PC-9 (cell line): ENCODE measurements at regions of chrX and their contacts with region 1.

Region 1: GRCh38 chrX:13734278-13735172 is at the starts of genes OFD1 and TRAPPC2:
- DNase-seq: peak; percentile 88 to 95
- H3K4me3 ChIP-seq: peak within 1 kb of the TSS; percentile 99
- H3K27ac ChIP-seq: peak within 1 kb of the TSS; percentile 96
- H3K4me1 ChIP-seq: peaks cover 15% of the 10 kb centered on the region; the same call in 1 of the 2 replicates
- H3K27me3 ChIP-seq: no peaks in the 10 kb centered on the region
- CTCF ChIP-seq: no peak
- total RNA-seq, gene OFD1: 31.6 and 35.6 TPM in 2 replicates
- total RNA-seq, gene TRAPPC2: 18.5 and 23.6 TPM in 2 replicates

Region 2: DNA sequence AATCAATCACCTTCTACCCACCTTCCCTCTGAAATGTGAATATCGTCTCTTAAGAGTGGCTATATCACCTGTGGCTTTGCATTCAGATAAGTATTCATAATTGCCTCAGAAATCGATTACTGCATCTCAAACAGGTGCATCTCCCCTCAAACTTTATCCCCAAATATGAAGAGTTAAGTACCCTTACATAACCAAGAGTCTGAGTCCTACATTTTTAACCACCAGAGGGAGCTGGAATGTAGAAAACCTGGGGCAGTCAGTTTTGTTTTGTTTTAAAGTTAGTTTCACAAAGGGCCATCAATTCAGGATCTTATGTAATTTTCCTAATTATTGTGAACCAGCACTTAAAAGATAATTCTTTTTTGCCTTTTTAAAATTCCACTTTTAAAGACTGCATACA is 75.9 kb before region 1 on chrX:
- CTCF ChIA-PET with region 1: interaction called, 3 read pairs
- POLR2A ChIA-PET with region 1: interaction called, 5 read pairs
- intact Hi-C with region 1: loop called (anchors 1 kb)
- DNase-seq: peak in 1 of 2 experiments; percentile 52
- H3K4me3 ChIP-seq: peak overlapping the region; percentile 42; the same call in 1 of the 2 replicates
- H3K27ac ChIP-seq: peak overlapping the region; percentile 91
- H3K4me1 ChIP-seq: peaks cover 24% of the 10 kb centered on the region
- H3K27me3 ChIP-seq: no peaks in the 10 kb centered on the region
- CTCF ChIP-seq: peak; percentile 84

Region 3: GRCh38 chrX:13669246-13669737 is 65.2 kb before region 1 on chrX:
- CTCF ChIA-PET with region 1: no interaction called
- POLR2A ChIA-PET with region 1: no interaction called
- intact Hi-C with region 1: loop called (anchors 2 kb)
- DNase-seq: peak; percentile 74 to 95
- H3K4me3 ChIP-seq: peak overlapping the region; percentile 35; the same call in 1 of the 2 replicates
- H3K27ac ChIP-seq: peak overlapping the region; percentile 94
- H3K4me1 ChIP-seq: peaks cover 35% of the 10 kb centered on the region
- H3K27me3 ChIP-seq: no peaks in the 10 kb centered on the region
- CTCF ChIP-seq: no peak

Region 4: DNA sequence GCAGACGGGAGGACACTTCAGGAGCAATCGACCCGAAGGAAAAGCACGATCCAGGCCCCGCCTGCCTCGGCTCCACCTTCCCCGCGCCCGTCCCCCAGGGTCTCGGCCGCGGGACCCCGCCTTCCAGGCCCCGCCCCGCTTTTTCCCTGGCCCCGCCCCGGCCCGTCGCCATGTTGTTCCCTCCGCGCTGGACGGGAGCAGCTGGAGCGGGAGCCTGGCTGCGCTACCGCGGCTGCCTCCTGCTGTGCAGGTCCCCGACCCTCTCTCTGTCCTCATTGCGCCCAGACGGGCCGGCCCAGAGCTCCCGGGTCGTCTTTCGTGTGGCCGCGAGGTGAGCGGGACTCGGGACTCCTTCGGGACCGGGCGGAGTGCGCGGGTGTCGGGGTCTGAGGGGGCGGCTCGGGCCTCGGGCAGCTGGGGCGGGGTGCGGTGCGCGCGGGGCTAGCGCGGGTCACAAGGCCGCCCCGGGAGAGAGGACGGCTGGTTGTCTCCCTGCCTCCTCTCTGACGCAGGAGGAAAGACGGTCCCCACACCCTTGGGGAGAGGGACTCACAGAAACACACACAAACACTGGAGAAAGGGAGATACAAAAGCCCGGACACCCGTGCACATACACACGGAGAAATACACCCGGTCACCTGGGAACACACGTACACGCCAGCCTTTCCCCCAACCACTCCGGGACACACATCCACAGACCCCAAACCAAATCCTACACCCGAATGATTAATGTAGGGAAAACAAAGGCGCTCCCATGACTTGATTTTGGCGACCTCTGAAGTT is 45.4 kb before region 1 on chrX and contains the start of gene RAB9A:
- CTCF ChIA-PET with region 1: interaction called, 3 read pairs
- POLR2A ChIA-PET with region 1: interaction called, 11 read pairs
- intact Hi-C with region 1: loop called (anchors 2 kb)
- DNase-seq: peak; percentile 54 to 88
- H3K4me3 ChIP-seq: peak within 1 kb of the TSS; percentile 63
- H3K27ac ChIP-seq: peak within 1 kb of the TSS; percentile 82
- H3K4me1 ChIP-seq: peaks cover 54% of the 10 kb centered on the region
- H3K27me3 ChIP-seq: no peaks in the 10 kb centered on the region
- CTCF ChIP-seq: no peak
- total RNA-seq, gene RAB9A: 26.7 and 30.7 TPM in 2 replicates

Region 5: DNA sequence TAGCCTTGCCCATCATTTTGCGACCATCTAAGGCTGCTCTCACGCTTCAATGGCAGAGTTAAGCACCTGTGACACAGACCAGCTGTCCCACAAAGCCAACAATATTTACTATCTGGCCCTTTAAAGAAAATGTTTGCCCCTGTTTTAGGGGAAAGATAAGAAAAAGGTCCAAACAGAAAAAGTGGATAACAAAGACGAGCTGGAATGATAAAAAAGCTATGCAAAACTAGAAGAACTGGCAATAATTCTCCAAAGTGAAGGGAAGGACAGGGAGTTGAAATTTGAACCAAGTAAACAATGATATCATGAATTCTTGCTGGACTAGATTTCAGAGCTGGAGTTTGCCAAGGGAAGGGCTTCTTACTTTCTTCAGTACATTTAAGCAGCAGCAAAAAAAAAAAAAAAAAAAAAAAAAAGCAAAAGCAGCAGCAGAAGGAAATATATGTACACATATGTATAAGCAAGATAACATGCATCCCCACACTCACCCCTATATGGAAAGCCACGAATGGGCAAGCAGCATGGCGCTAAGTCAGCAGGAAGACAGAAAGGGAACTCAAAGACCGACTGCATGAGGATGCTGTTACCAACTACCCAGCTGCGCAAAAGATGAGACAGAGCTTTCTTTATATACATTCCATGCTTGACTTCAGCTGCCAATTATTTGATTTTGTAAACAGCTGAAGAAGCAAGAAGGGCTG is 12.6 kb before region 1 on chrX:
- CTCF ChIA-PET with region 1: no interaction called
- POLR2A ChIA-PET with region 1: interaction called, 18 read pairs
- intact Hi-C with region 1: no loop called
- DNase-seq: peak; percentile 11 to 85
- H3K4me3 ChIP-seq: no peak overlapping the region
- H3K27ac ChIP-seq: peak overlapping the region; percentile 46; the same call in 1 of the 2 replicates
- H3K4me1 ChIP-seq: peaks cover 15% of the 10 kb centered on the region
- H3K27me3 ChIP-seq: no peaks in the 10 kb centered on the region
- CTCF ChIP-seq: no peak

Region 6: DNA sequence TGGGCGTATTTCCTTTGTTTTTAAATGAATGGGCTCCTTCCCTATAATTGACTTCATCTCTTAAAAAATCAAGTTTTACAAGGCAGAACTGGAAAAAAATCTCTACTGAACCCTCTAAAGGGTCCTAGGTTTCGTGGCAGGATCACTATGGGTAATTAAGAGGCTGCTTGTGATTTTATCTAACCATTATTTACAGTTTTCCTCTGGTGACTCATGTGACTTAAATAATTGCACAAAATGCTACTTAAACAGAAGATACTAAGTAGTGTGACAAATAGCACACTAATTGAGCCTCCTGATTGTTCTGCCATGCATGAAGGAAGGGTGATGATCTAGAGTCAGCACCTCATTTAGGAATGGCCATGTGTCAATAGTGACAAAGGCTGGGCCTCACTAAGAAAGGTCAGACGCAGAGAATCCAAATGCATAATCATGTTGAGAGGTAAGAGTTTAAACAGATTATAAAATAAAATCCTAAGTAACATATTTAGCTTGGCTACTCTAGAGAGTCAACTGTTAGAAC is 35.5 kb after region 1 on chrX:
- CTCF ChIA-PET with region 1: no interaction called
- POLR2A ChIA-PET with region 1: interaction called, 11 read pairs
- intact Hi-C with region 1: no loop called
- DNase-seq: no peak
- H3K4me3 ChIP-seq: no peak overlapping the region
- H3K27ac ChIP-seq: no peak overlapping the region
- H3K4me1 ChIP-seq: no peaks in the 10 kb centered on the region
- H3K27me3 ChIP-seq: no peaks in the 10 kb centered on the region
- CTCF ChIP-seq: no peak